ENCODE measurements at regions of chr16 and their contacts with region 1.

Region 1: DNA sequence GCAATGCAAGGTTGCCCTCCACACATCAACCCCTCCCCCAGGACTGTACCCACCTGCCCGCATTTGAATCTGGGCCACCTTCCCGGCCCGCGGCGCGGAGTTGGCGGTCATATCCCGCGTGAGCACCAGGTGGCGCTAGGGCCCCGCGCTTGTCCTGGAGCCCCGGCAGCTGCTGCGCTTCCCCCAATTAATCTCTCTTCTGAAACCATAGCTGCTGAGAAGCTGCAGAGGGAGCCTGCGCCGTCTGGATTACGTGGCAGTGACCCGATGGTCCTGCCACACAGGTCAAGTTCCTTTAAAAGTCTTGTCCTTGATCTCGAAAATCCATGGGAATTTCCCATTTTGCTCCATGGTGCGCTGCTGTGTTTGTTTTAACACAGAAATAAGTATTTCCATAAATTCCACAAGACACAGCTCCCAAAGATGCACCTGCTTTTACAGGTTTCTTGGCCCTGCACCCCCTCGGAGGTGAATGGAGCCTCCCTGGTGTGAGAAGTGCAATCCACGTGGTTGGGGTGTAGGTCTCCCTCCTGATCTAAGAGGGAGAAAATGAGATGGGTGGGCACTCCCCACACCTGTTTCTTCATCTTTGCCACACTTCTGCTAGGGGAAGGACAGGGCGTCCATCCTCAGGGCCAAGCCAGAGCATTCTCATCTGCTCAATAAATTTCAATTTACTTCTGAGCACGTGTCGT is 22.1 kb downstream of the COX4I1 start:
- DNase-seq: peak; percentile 90
- H3K4me3 Mint-ChIP-seq: no peak overlapping the region
- H3K27ac Mint-ChIP-seq: no peak overlapping the region
- H3K4me1 Mint-ChIP-seq: no peaks in the 10 kb centered on the region
- H3K27me3 Mint-ChIP-seq: peaks cover 43% of the 10 kb centered on the region
- CTCF ChIP-seq: peak; percentile 99

Region 2: DNA sequence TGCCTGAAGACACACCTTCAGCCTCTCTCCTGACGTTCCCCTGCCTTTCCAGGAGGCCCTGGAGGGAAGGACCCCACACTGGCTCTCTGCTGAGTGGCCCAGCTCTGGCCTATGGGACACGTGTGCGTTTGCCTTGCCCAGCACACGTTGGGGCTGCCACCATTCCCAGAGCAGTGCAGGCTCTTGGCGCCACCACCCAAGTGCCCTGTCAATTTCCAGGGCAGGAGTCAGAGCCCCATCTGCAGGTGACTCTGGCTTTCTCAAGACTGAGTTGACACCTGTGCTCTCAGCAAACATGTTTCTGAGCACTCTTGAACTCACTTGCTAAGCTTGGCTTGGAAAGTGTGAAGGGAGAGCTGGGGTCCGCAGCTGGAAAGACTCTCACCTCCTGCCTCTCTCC is 72.7 kb after region 1 on chr16:
- CTCF ChIA-PET with region 1: interaction called, 15 read pairs
- intact Hi-C with region 1: loop called (anchors 2 kb)
- DNase-seq: peak; percentile 67
- H3K4me3 Mint-ChIP-seq: no peak overlapping the region
- H3K27ac Mint-ChIP-seq: no peak overlapping the region
- H3K4me1 Mint-ChIP-seq: peaks cover 45% of the 10 kb centered on the region
- H3K27me3 Mint-ChIP-seq: peaks cover 43% of the 10 kb centered on the region
- CTCF ChIP-seq: peak; percentile 31

Region 3: DNA sequence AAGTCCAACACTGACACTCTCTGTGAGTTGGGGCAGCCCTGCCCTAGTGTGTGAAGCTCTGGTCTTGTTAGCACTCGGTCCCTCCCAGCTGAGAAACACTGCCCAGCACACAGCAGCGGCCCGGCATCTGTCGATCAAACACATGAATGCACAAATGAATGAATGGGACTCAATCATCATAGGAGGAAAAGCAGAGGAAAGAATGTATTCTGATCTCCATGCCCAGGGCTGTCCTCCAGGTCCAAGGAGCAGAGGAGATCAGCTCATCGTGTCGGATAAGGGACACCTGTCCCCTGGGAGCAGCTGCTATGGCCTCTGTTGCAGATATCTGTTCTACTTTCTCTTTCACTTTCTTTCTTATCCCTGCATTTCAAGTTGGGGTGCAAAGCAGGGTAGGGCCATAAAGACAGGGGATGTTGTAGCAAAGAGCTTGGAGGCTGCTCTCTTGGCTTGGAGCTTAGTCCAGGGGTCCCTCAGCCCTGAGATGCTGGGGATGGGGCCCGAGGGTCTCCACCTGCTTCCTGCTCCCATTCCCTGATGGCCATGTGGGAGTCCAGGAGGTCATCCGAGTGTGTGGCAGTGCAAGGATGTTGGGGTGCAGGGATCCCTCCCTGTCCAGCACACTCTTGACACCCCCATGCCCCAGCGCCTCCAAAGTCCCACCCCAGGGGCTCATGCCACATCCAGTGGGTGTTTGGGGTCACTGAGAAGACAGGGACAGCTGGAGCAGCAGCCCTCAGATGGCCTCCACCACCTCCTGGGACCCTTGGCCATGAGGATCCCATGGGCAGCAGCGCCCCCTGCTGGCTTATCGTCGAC is 165.6 kb after region 1 on chr16:
- CTCF ChIA-PET with region 1: interaction called, 128 read pairs
- intact Hi-C with region 1: loop called (anchors 1 kb)
- DNase-seq: peak; percentile 44
- H3K4me3 Mint-ChIP-seq: peak overlapping the region; percentile 48
- H3K27ac Mint-ChIP-seq: no peak overlapping the region
- H3K4me1 Mint-ChIP-seq: peaks cover 8% of the 10 kb centered on the region
- H3K27me3 Mint-ChIP-seq: peaks cover 45% of the 10 kb centered on the region
- CTCF ChIP-seq: peak; percentile 94

Region 4: GRCh38 chr16:86016201-86016871 is 194.7 kb after region 1 on chr16:
- CTCF ChIA-PET with region 1: interaction called, 45 read pairs
- intact Hi-C with region 1: loop called (anchors 1 kb)
- DNase-seq: peak; percentile 60
- H3K4me3 Mint-ChIP-seq: no peak overlapping the region
- H3K27ac Mint-ChIP-seq: no peak overlapping the region
- H3K4me1 Mint-ChIP-seq: no peaks in the 10 kb centered on the region
- H3K27me3 Mint-ChIP-seq: peaks cover 80% of the 10 kb centered on the region
- CTCF ChIP-seq: peak; percentile 90

Region 5: GRCh38 chr16:86519649-86520316 is 698.2 kb after region 1 on chr16:
- CTCF ChIA-PET with region 1: interaction called, 11 read pairs
- intact Hi-C with region 1: loop called (anchors 5 kb)
- DNase-seq: peak; percentile 75
- H3K4me3 Mint-ChIP-seq: peak overlapping the region; percentile 61
- H3K27ac Mint-ChIP-seq: no peak overlapping the region
- H3K4me1 Mint-ChIP-seq: no peaks in the 10 kb centered on the region
- H3K27me3 Mint-ChIP-seq: peaks cover 98% of the 10 kb centered on the region
- CTCF ChIP-seq: peak; percentile 96